Activated B cell treated with CpG ODN at 0.5 μM for 24 hours (primary cell): ENCODE measurements at regions of chr5 and their contacts with region 1.

Region 1: GRCh38 chr5:87400305-87400899 is 12.3 kb downstream of the CCNH start:
- DNase-seq: no peak
- ATAC-seq: peak; percentile 94
- H3K4me3 Mint-ChIP-seq: no peak overlapping the region
- H3K27ac Mint-ChIP-seq: no peak overlapping the region
- H3K4me1 Mint-ChIP-seq: peaks cover 9% of the 10 kb centered on the region
- H3K27me3 Mint-ChIP-seq: no peaks in the 10 kb centered on the region
- CTCF ChIP-seq: peak; percentile 17

Region 2: DNA sequence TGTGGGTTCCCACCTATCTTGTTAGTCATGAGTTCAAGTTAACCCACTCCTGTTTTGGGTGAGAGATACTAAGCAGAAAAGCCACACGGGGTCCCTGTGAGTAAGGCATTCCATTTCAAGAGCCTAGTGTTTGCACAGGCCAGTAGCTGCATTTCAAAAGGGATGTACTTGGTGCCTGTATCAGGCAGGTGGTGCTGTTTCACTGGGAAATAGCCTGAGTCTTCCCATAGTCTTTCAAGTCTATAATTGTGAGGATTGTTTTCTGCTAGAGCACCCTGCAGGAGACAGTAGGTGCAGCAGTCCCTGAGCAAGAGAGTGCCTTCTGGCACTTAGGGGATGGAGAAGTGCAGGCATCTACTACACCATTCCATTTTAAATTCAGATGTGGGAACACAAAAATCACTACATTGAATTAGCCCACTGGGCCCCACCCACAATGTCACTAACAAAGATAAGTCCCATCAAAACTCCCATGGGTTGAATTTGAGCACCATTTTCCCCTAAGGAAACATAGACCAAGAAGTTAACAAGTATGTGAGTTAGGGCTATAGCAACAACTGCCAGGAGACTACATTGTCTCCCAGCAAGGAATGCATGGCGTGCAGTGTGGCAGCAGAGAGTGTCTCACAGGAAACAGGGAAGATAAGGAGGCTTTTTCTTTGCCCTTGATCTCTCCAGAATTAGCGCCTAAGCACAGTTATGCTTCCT is 519.5 kb before region 1 on chr5:
- CTCF ChIA-PET with region 1: no interaction called
- POLR2A ChIA-PET with region 1: no interaction called
- intact Hi-C with region 1: loop called (anchors 1 kb)
- DNase-seq: no peak
- ATAC-seq: peak; percentile 60
- H3K4me3 Mint-ChIP-seq: no peak overlapping the region
- H3K27ac Mint-ChIP-seq: no peak overlapping the region
- H3K4me1 Mint-ChIP-seq: no peaks in the 10 kb centered on the region
- H3K27me3 Mint-ChIP-seq: peaks cover 2% of the 10 kb centered on the region
- CTCF ChIP-seq: no peak

Region 3: GRCh38 chr5:86971034-86971571 is 429.3 kb before region 1 on chr5:
- CTCF ChIA-PET with region 1: interaction called, 3 read pairs
- POLR2A ChIA-PET with region 1: no interaction called
- intact Hi-C with region 1: loop called (anchors 1 kb)
- DNase-seq: no peak
- ATAC-seq: peak; percentile 25
- H3K4me3 Mint-ChIP-seq: no peak overlapping the region
- H3K27ac Mint-ChIP-seq: no peak overlapping the region
- H3K4me1 Mint-ChIP-seq: peaks cover 4% of the 10 kb centered on the region
- H3K27me3 Mint-ChIP-seq: peaks cover 5% of the 10 kb centered on the region
- CTCF ChIP-seq: no peak

Region 4: DNA sequence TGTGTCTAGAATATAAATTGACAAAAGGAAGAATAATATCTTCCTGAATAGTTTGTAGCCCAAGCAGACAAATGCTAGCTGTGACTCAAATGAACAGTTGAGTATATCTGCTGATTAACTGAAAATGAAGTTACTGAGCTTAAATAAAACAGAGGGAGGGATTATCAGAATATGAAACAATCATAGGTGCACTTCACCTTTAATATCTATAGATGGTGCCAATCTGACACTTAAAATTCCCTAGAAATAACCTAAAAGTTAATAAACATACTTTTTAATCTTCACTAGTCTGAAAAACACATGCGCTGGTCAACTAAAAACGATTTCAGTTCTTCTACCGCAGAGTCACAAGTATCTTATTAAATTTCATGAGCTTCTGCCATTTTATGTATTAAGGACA is 413.6 kb before region 1 on chr5:
- CTCF ChIA-PET with region 1: interaction called, 7 read pairs
- POLR2A ChIA-PET with region 1: no interaction called
- intact Hi-C with region 1: loop called (anchors 1 kb)
- DNase-seq: no peak
- ATAC-seq: no peak
- H3K4me3 Mint-ChIP-seq: no peak overlapping the region
- H3K27ac Mint-ChIP-seq: no peak overlapping the region
- H3K4me1 Mint-ChIP-seq: no peaks in the 10 kb centered on the region
- H3K27me3 Mint-ChIP-seq: no peaks in the 10 kb centered on the region
- CTCF ChIP-seq: no peak

Region 5: GRCh38 chr5:87069974-87070624 is 330.3 kb before region 1 on chr5:
- CTCF ChIA-PET with region 1: interaction called, 51 read pairs
- POLR2A ChIA-PET with region 1: no interaction called
- intact Hi-C with region 1: loop called (anchors 1 kb)
- DNase-seq: no peak
- ATAC-seq: peak; percentile 37
- H3K4me3 Mint-ChIP-seq: no peak overlapping the region
- H3K27ac Mint-ChIP-seq: no peak overlapping the region
- H3K4me1 Mint-ChIP-seq: peaks cover 26% of the 10 kb centered on the region
- H3K27me3 Mint-ChIP-seq: no peaks in the 10 kb centered on the region
- CTCF ChIP-seq: no peak